Transverse colon (tissue), 4 donors: ENCODE measurements at regions of chr1 and their contacts with region 1.

Region 1: DNA sequence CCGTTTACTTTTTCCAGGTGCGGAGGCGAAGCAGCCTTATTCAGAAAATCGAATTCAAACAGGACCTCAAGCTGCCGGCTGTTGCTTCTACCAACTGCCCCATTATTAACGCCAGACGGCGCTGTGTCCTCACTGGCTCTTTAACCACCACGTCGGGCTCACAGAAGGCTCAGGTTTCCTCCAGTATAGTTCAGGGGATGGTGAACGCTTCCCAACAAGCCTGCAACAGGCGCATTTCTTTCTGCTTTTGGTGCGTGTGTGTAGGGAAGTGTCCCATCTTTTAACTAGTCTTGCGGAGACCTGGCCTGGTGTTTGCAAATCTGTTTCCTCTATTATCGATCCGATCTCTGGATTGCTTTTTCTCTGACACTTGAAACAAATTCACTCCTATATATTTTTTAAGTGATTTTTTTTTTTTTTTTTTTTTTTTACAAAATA is 791 bp upstream of the STUM start:
- DNase-seq: peak; percentile 83
- H3K4me3 ChIP-seq: peak overlapping the region in 1 of 4 donors; percentile 65
- H3K27ac ChIP-seq: peak overlapping the region in 3 of 4 donors; percentile 17 to 81 (median 74)
- H3K4me1 ChIP-seq: peaks cover 8 to 52% (median 45%) of the 10 kb centered on the region in 4 donors
- H3K27me3 ChIP-seq: peaks cover 28% of the 10 kb centered on the region
- CTCF ChIP-seq: peak; percentile 76 to 91 (median 85)
- EP300 ChIP-seq: no peak
- POLR2A ChIP-seq: no peak

Region 2: DNA sequence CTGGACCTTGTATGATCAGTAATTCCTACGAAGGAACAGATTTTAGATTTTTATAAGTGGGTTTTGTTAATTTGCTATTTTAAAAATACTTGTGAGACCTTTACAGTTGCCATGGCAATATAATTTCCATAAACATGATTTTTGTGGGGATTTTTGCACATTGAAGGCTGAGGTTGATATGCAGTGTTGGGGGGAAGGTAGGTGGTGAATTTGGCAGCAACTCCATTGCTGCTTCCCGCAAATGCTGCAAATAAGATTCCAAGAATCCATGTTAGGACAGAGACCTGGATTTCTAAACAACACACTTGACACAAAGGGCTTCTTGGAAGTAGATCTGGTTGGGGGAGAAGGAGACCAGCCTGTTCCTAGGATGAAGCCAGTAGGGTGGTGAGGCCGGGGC is 19.0 kb after region 1 on chr1:
- in situ Hi-C with region 1: no loop called
- intact Hi-C with region 1: loop called (anchors 2 kb)
- DNase-seq: no peak
- H3K4me3 ChIP-seq: no peak overlapping the region
- H3K27ac ChIP-seq: peak overlapping the region; percentile 58 to 73 (median 68)
- H3K4me1 ChIP-seq: peaks cover 4 to 29% (median 15%) of the 10 kb centered on the region in 4 donors
- H3K27me3 ChIP-seq: no peaks in the 10 kb centered on the region
- CTCF ChIP-seq: no peak
- EP300 ChIP-seq: peak; percentile 41
- POLR2A ChIP-seq: no peak

Region 3: DNA sequence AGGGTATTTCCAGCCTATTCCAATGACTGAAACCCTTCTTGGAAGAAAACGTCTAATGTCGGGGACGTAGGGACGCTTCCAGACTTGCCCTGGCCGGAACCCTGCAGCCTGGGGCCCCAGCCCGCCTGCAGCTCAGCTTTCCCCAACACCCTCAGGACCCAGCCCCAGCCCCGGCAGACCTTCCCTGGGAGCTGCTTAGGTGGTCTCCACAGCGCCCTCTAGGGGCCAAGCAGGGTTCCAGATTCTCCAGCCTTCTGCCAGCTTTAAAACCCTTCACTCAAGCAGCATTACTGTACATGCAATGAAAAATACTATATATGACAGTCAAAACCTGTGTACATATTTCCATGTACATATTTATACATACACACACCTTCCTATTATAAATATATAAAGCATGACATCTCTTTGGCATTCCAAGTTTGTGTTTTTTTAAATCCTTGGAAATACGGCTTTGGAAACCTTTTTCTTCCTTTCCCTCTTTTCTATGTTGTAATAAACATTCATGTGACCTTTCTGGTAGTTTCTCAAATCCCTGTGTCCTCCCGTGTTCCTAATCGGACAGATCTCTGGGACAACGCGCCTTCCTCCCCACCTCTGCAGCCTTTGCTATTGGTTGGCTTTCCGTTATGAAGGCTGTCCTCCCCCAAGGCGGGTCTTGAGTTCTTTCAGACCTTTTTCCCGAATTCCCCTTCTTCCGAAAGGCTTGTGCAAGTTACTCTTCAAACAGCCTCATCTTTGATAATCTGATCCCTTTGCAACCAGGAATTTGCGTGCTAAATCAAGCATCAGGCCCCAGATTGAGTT is 61.1 kb after region 1 on chr1:
- in situ Hi-C with region 1: no loop called
- intact Hi-C with region 1: loop called (anchors 2 kb)
- DNase-seq: peak; percentile 74
- H3K4me3 ChIP-seq: no peak overlapping the region
- H3K27ac ChIP-seq: no peak overlapping the region
- H3K4me1 ChIP-seq: peaks cover under 1 to 6% (median 3%) of the 10 kb centered on the region in 4 donors
- H3K27me3 ChIP-seq: no peaks in the 10 kb centered on the region
- CTCF ChIP-seq: peak; percentile 74 to 90 (median 84)
- EP300 ChIP-seq: no peak
- POLR2A ChIP-seq: no peak